ENCODE measurements at regions of chr6 and their contacts with region 1.

Region 1: DNA sequence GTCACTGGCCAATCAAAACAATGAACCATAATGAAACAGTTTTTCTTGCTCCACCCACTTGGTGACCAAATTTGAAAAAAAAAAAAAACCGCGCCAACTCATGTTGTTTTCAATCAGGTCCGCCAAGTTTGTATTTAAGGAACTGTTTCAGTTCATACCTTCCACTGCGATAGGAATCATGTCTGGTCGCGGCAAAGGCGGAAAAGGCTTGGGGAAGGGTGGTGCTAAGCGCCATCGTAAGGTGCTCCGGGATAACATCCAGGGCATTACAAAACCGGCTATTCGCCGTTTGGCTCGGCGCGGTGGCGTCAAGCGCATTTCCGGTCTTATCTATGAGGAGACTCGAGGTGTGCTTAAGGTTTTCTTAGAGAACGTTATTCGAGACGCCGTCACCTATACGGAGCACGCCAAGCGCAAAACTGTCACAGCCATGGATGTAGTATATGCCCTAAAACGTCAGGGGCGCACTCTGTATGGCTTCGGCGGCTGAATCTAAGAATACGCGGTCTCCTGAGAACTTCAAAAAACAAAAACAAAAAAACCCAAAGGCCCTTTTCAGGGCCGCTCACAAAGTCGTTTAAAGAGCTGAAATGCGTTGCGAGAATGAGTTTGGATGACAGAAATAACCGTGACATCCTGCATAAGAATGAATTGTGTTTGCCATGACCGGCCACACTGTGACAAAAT is 16.7 kb downstream of the HFE start:
- DNase-seq: peak; percentile 83
- ATAC-seq: peak; percentile 85
- H3K4me3 Mint-ChIP-seq: peak overlapping the region; percentile 85
- H3K27ac Mint-ChIP-seq: peak overlapping the region; percentile 98
- H3K4me1 Mint-ChIP-seq: peaks cover 12% of the 10 kb centered on the region
- H3K27me3 Mint-ChIP-seq: peaks cover 3% of the 10 kb centered on the region
- CTCF ChIP-seq: no peak

Region 2: GRCh38 chr6:26031595-26032339 is 72.1 kb before region 1 on chr6:
- CTCF ChIA-PET with region 1: interaction called, 8 read pairs
- POLR2A ChIA-PET with region 1: interaction called, 38 read pairs
- intact Hi-C with region 1: loop called (anchors 1 kb)
- DNase-seq: peak; percentile 55
- ATAC-seq: peak; percentile 62
- H3K4me3 Mint-ChIP-seq: peak overlapping the region; percentile 93
- H3K27ac Mint-ChIP-seq: peak overlapping the region; percentile 98
- H3K4me1 Mint-ChIP-seq: peaks cover 40% of the 10 kb centered on the region
- H3K27me3 Mint-ChIP-seq: peaks cover 2% of the 10 kb centered on the region
- CTCF ChIP-seq: no peak

Region 3: DNA sequence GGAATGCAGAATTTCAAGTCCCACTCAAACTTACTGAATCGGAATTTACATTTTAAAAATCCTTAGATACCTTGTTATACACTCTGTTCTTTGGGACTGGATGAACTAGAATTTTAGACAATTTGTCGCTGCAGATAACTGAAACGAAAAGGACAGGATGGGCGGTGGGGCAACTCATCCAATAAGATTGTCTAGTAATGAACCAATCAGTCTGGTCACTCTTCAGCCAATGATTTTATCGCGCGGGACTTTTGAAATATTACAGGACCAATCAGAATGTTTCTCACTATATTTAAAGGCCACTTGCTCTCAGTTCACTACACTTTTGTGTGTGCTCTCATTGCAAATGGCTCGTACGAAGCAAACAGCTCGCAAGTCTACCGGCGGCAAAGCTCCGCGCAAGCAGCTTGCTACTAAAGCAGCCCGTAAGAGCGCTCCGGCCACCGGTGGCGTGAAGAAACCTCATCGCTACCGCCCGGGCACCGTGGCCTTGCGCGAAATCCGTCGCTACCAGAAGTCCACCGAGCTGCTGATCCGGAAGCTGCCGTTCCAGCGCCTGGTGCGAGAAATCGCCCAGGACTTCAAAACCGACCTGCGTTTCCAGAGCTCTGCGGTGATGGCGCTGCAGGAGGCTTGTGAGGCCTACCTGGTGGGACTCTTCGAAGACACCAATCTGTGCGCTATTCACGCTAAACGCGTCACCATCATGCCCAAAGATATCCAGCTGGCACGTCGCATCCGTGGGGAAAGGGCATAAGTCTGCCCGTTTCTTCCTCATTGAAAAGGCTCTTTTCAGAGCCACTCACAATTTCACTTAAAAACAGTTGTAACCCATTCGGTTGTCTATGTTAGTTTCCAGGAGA is 58.6 kb before region 1 on chr6:
- CTCF ChIA-PET with region 1: no interaction called
- POLR2A ChIA-PET with region 1: interaction called, 70 read pairs
- intact Hi-C with region 1: loop called (anchors 1 kb)
- DNase-seq: peak; percentile 51
- ATAC-seq: peak; percentile 58
- H3K4me3 Mint-ChIP-seq: peak overlapping the region; percentile 91
- H3K27ac Mint-ChIP-seq: peak overlapping the region; percentile 99
- H3K4me1 Mint-ChIP-seq: peaks cover 24% of the 10 kb centered on the region
- H3K27me3 Mint-ChIP-seq: no peaks in the 10 kb centered on the region
- CTCF ChIP-seq: no peak

Region 4: DNA sequence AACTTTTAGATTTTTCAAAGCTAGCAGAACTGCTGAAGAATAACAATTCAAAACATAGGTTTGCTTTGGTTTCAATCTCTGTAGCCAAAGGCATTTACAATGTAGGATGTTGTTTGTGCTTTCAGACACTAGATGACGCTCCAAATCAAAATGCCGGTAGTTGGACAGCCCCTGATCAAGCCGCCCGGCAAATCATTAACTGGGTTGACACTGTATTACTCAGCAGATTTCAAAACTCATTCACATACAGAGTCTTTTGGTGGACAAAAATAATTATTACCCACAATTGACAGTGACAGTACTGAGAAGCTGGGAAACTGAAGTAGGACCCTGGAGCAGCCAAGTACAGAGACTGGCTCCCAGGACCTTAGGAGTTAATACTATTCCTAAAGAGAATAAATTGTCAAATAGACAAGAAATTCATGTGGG is 37.9 kb before region 1 on chr6:
- CTCF ChIA-PET with region 1: interaction called, 349 read pairs
- POLR2A ChIA-PET with region 1: interaction called, 175 read pairs
- intact Hi-C with region 1: no loop called
- DNase-seq: no peak
- ATAC-seq: peak; percentile 97
- H3K4me3 Mint-ChIP-seq: no peak overlapping the region
- H3K27ac Mint-ChIP-seq: peak overlapping the region; percentile 35
- H3K4me1 Mint-ChIP-seq: peaks cover 8% of the 10 kb centered on the region
- H3K27me3 Mint-ChIP-seq: peaks cover 3% of the 10 kb centered on the region
- CTCF ChIP-seq: peak; percentile 39

Region 5: DNA sequence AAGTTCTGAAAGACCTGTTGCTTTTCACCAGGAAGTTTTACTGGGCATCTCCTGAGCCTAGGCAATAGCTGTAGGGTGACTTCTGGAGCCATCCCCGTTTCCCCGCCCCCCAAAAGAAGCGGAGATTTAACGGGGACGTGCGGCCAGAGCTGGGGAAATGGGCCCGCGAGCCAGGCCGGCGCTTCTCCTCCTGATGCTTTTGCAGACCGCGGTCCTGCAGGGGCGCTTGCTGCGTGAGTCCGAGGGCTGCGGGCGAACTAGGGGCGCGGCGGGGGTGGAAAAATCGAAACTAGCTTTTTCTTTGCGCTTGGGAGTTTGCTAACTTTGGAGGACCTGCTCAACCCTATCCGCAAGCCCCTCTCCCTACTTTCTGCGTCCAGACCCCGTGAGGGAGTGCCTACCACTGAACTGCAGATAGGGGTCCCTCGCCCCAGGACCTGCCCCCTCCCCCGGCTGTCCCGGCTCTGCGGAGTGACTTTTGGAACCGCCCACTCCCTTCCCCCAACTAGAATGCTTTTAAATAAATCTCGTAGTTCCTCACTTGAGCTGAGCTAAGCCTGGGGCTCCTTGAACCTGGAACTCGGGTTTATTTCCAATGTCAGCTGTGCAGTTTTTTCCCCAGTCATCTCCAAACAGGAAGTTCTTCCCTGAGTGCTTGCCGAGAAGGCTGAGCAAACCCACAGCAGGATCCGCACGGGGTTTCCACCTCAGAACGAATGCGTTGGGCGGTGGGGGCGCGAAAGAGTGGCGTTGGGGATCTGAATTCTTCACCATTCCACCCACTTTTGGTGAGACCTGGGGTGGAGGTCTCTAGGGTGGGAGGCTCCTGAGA is 16.4 kb before region 1 on chr6 and contains the start of gene HFE:
- CTCF ChIA-PET with region 1: interaction called, 3 read pairs
- POLR2A ChIA-PET with region 1: interaction called, 35 read pairs
- intact Hi-C with region 1: no loop called
- DNase-seq: peak; percentile 46
- ATAC-seq: peak; percentile 69
- H3K4me3 Mint-ChIP-seq: peak within 1 kb of the TSS; percentile 89
- H3K27ac Mint-ChIP-seq: peak within 1 kb of the TSS; percentile 82
- H3K4me1 Mint-ChIP-seq: peaks cover 43% of the 10 kb centered on the region
- H3K27me3 Mint-ChIP-seq: no peaks in the 10 kb centered on the region
- CTCF ChIP-seq: no peak
- total RNA-seq, gene HFE: 0.98 and 1.1 TPM in 2 replicates

Region 6: DNA sequence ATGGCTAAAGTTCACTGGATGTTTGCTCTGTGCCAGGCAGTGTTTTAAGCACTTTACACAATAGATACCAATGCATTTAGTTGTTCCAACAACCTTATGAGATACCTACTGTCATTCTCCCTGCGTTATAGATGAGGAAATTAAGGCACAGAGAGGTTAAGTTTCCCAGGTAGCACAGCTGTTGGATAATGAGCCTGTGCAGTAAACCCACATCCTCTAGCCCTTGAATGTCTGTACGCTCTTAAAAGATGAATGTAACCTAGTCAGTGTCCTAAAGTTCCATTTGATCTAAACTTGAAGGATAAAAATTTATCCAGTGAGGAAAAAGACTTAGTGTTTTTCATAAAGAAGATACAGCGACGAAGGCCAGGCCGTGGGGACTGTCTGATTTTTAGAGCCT is 11.3 kb after region 1 on chr6:
- CTCF ChIA-PET with region 1: no interaction called
- POLR2A ChIA-PET with region 1: interaction called, 22 read pairs
- intact Hi-C with region 1: no loop called
- DNase-seq: no peak
- ATAC-seq: no peak
- H3K4me3 Mint-ChIP-seq: no peak overlapping the region
- H3K27ac Mint-ChIP-seq: no peak overlapping the region
- H3K4me1 Mint-ChIP-seq: no peaks in the 10 kb centered on the region
- H3K27me3 Mint-ChIP-seq: no peaks in the 10 kb centered on the region
- CTCF ChIP-seq: no peak

Region 7: DNA sequence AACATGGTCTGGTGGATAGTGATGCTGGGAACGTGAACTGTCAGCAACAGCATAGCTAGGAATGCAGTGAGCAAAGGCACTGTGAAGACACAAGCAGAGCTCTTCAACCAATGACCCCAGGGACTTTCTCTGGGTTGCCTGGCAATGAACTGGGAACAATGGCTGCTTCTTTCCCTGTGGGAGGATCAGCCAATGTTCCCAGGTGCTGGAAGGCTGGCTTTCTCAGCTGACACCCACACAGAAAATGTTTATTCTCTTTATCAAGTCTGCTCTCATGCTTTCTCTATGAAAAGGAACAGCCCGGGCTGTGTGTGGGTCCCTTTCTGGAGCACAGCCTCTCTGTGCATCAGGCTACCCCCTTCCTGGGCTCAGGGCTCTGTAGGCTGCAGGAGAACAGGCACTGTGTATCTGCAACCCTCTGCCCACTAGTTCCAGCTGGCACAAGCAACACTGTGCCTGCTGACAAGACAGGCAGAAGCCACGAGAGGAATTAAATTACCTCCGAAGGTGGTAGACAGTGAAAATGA is 37.5 kb after region 1 on chr6:
- CTCF ChIA-PET with region 1: no interaction called
- POLR2A ChIA-PET with region 1: no interaction called
- intact Hi-C with region 1: no loop called
- DNase-seq: no peak
- ATAC-seq: no peak
- H3K4me3 Mint-ChIP-seq: no peak overlapping the region
- H3K27ac Mint-ChIP-seq: no peak overlapping the region
- H3K4me1 Mint-ChIP-seq: peaks cover 7% of the 10 kb centered on the region
- H3K27me3 Mint-ChIP-seq: no peaks in the 10 kb centered on the region
- CTCF ChIP-seq: no peak

Region 8: GRCh38 chr6:26205625-26206574 is 102.0 kb after region 1 on chr6:
- CTCF ChIA-PET with region 1: no interaction called
- POLR2A ChIA-PET with region 1: no interaction called
- intact Hi-C with region 1: no loop called
- DNase-seq: no peak
- ATAC-seq: peak; percentile 9
- H3K4me3 Mint-ChIP-seq: no peak overlapping the region
- H3K27ac Mint-ChIP-seq: no peak overlapping the region
- H3K4me1 Mint-ChIP-seq: peaks cover 21% of the 10 kb centered on the region
- H3K27me3 Mint-ChIP-seq: peaks cover 2% of the 10 kb centered on the region
- CTCF ChIP-seq: no peak

Region 9: GRCh38 chr6:27825025-27825793 is 1721.3 kb after region 1 on chr6:
- CTCF ChIA-PET with region 1: no interaction called
- POLR2A ChIA-PET with region 1: interaction called, 24 read pairs
- intact Hi-C with region 1: no loop called
- DNase-seq: no peak
- ATAC-seq: no peak
- H3K4me3 Mint-ChIP-seq: peak overlapping the region; percentile 96
- H3K27ac Mint-ChIP-seq: peak overlapping the region; percentile 99
- H3K4me1 Mint-ChIP-seq: peaks cover 31% of the 10 kb centered on the region
- H3K27me3 Mint-ChIP-seq: no peaks in the 10 kb centered on the region
- CTCF ChIP-seq: no peak

Measured in activated B cell treated with CpG ODN at 0.5 μM for 24 hours (primary cell).